GM12878 (cell line): ENCODE measurements at regions of chr15 and their contacts with region 1.

Region 1: GRCh38 chr15:89171136-89172072 is 50.0 kb downstream of the RLBP1 start:
- DNase-seq: no peak
- ATAC-seq: peak; percentile 22; the same call in 1 of the 3 replicates
- H3K4me3 ChIP-seq: no peak overlapping the region
- H3K27ac ChIP-seq: no peak overlapping the region
- H3K4me1 ChIP-seq: peaks cover 18% of the 10 kb centered on the region
- H3K27me3 ChIP-seq: no peaks in the 10 kb centered on the region
- CTCF ChIP-seq: peak; percentile 54 to 68 (median 64)
- EP300 ChIP-seq: no peak
- POLR2A ChIP-seq: no peak
- RAD21 ChIP-seq: peak; percentile 53

Region 2: GRCh38 chr15:89087830-89088604 is 83.4 kb before region 1 on chr15 and contains the start of gene ABHD2:
- CTCF ChIA-PET with region 1: interaction called, 42 read pairs
- POLR2A ChIA-PET with region 1: interaction called, 5 read pairs
- RAD21 ChIA-PET with region 1: interaction called, 10 read pairs
- SMC1A ChIA-PET with region 1: interaction called, 16 read pairs
- in situ Hi-C with region 1: no loop called
- intact Hi-C with region 1: no loop called
- DNase-seq: peak; percentile 99
- ATAC-seq: peak; percentile 96
- H3K4me3 ChIP-seq: peak within 1 kb of the TSS; percentile 88
- H3K27ac ChIP-seq: peak within 1 kb of the TSS; percentile 56
- H3K4me1 ChIP-seq: no peaks in the 10 kb centered on the region; the same call in 1 of the 2 replicates
- H3K27me3 ChIP-seq: no peaks in the 10 kb centered on the region
- CTCF ChIP-seq: no peak
- EP300 ChIP-seq: 0 out of 4 replicates have a peak, but pooled peaks of 1 of the 2 experiments have one; percentile 28
- POLR2A ChIP-seq: peak; percentile 84
- RAD21 ChIP-seq: no peak
- polyA plus RNA-seq, gene ABHD2: 1.2 to 4.7 TPM

Region 3: GRCh38 chr15:89112341-89112971 is 58.9 kb before region 1 on chr15:
- CTCF ChIA-PET with region 1: interaction called, 13 read pairs
- POLR2A ChIA-PET with region 1: no interaction called
- RAD21 ChIA-PET with region 1: no interaction called
- SMC1A ChIA-PET with region 1: interaction called, 8 read pairs
- in situ Hi-C with region 1: no loop called
- intact Hi-C with region 1: no loop called
- DNase-seq: peak; percentile 38
- ATAC-seq: peak; percentile 99
- H3K4me3 ChIP-seq: no peak overlapping the region
- H3K27ac ChIP-seq: peak overlapping the region; percentile 23
- H3K4me1 ChIP-seq: peaks cover 8% of the 10 kb centered on the region; the same call in 1 of the 2 replicates
- H3K27me3 ChIP-seq: no peaks in the 10 kb centered on the region
- CTCF ChIP-seq: no peak
- EP300 ChIP-seq: peak; percentile 66 to 74; a peak in 3 of 4 replicates
- POLR2A ChIP-seq: no peak
- RAD21 ChIP-seq: no peak

Region 4: DNA sequence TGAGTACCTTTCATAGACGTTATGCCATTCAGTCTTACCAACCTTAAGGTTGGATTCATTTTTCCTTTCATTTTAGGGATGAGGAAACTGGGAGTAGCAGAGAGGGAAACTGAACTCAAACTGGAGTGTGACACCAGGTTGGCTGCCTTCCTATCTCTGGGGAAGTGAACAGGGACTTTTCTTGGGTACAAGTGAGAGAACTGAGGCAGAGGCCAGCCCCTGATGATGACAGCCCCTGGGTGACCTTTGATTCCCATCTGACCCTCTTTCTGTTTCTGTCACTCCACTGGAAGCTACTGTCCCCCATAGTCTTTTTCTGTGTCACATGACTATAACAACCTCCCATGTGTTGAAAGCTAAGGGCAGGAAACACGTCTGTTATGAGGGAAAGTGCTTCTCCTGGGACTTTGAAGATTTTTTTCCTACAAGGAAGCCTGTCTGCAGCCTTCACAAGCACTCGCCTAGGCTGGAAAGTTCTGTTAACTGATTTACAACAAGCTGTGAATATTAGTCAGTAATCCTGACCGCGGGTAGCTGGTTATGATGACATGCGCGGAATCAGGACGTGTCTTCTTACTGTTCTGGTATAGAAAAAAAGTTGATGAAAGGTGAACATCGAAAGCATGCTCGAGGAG is 51.8 kb before region 1 on chr15:
- CTCF ChIA-PET with region 1: interaction called, 10 read pairs
- POLR2A ChIA-PET with region 1: interaction called, 3 read pairs
- RAD21 ChIA-PET with region 1: no interaction called
- SMC1A ChIA-PET with region 1: interaction called, 3 read pairs
- in situ Hi-C with region 1: no loop called
- intact Hi-C with region 1: no loop called
- DNase-seq: no peak
- ATAC-seq: no peak
- H3K4me3 ChIP-seq: no peak overlapping the region
- H3K27ac ChIP-seq: no peak overlapping the region
- H3K4me1 ChIP-seq: no peaks in the 10 kb centered on the region
- H3K27me3 ChIP-seq: no peaks in the 10 kb centered on the region
- CTCF ChIP-seq: no peak
- EP300 ChIP-seq: no peak
- POLR2A ChIP-seq: no peak
- RAD21 ChIP-seq: no peak

Region 5: DNA sequence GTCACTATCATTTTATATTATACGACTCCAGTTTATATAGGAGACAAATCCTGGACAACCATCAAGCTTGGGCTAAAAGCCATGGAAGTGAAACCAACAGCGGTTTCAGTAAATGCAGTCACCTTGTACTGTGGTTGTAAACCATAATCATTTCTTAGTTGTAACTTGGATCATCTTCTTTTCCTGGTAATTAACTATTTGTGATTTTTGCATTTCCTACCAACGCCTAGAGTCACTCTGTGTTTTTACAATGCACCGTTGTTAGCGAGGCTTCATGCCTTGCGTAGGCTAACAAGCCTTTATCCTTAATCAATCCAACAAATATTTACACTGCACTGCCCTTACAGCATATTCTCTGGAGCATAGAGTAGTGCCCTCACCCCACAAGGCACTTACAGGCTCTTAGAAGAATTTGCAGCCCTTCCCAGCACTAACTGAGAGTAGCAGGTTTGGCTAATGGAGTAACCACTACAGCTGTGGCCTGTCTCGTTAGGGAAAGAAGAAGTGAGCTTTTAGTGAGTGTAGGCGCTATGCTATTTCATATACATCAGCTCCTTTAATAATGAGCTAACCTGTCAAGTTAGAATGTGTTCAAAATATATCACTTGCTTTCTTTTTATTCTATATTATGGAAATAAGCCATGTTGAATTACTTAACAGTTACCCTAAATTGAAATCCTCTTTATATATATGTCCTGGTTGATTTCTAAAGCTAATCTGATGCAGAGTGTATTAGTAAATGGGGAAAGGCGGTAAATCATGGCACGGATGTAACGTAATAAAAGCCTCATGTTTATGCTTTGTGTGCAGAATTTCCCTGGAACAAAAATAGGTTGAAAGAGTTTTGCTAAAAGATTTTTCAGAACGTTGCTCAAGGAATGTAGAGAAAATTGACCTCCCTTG is 20.4 kb before region 1 on chr15:
- CTCF ChIA-PET with region 1: interaction called, 24 read pairs
- POLR2A ChIA-PET with region 1: interaction called, 3 read pairs
- RAD21 ChIA-PET with region 1: interaction called, 3 read pairs
- SMC1A ChIA-PET with region 1: interaction called, 11 read pairs
- in situ Hi-C with region 1: no loop called
- intact Hi-C with region 1: no loop called
- DNase-seq: no peak
- ATAC-seq: no peak
- H3K4me3 ChIP-seq: no peak overlapping the region
- H3K27ac ChIP-seq: no peak overlapping the region
- H3K4me1 ChIP-seq: no peaks in the 10 kb centered on the region
- H3K27me3 ChIP-seq: no peaks in the 10 kb centered on the region
- CTCF ChIP-seq: no peak
- EP300 ChIP-seq: no peak
- POLR2A ChIP-seq: no peak
- RAD21 ChIP-seq: no peak

Region 6: DNA sequence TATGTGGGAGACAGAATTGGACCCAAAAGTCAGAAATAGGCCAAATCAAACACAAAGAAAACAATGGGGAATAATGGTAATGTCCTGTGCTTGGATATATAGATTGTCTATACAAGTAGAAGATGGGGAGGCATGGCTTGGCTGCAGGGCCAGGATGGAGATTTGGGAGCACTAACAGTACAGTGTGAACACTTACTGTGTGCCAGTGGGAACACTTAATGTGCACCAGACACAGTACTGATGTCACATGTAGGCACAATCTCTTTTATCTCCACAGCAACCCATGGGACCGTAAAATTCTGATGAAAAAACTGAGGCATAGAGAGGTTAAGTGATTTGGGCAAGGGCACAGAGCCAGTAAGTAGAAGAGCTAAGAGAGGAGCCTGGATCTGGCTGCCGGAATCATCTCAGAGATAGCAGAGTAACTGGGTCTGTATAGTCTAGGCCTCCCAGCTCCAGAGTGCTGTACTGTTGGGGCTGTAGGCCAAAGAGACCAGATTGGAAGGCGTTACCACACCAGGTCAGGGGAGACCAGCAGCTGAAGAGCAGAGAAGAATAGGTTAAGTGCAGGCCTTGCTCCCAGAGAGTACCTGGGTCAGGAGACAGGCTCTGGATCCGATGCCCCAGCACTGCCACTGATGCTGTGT is 13.4 kb before region 1 on chr15:
- CTCF ChIA-PET with region 1: interaction called, 24 read pairs
- POLR2A ChIA-PET with region 1: no interaction called
- RAD21 ChIA-PET with region 1: no interaction called
- SMC1A ChIA-PET with region 1: interaction called, 3 read pairs
- in situ Hi-C with region 1: no loop called
- intact Hi-C with region 1: no loop called
- DNase-seq: no peak
- ATAC-seq: no peak
- H3K4me3 ChIP-seq: no peak overlapping the region
- H3K27ac ChIP-seq: no peak overlapping the region
- H3K4me1 ChIP-seq: no peaks in the 10 kb centered on the region
- H3K27me3 ChIP-seq: no peaks in the 10 kb centered on the region
- CTCF ChIP-seq: no peak
- EP300 ChIP-seq: no peak
- POLR2A ChIP-seq: no peak
- RAD21 ChIP-seq: no peak

Region 7: GRCh38 chr15:89378296-89379151 is 207.1 kb after region 1 on chr15:
- CTCF ChIA-PET with region 1: no interaction called
- POLR2A ChIA-PET with region 1: no interaction called
- RAD21 ChIA-PET with region 1: no interaction called
- SMC1A ChIA-PET with region 1: no interaction called
- in situ Hi-C with region 1: no loop called
- intact Hi-C with region 1: no loop called
- DNase-seq: no peak
- ATAC-seq: no peak
- H3K4me3 ChIP-seq: no peak overlapping the region
- H3K27ac ChIP-seq: no peak overlapping the region
- H3K4me1 ChIP-seq: no peaks in the 10 kb centered on the region
- H3K27me3 ChIP-seq: peaks cover 26 to 32% of the 10 kb centered on the region in 2 experiments
- CTCF ChIP-seq: no peak
- EP300 ChIP-seq: no peak
- POLR2A ChIP-seq: no peak
- RAD21 ChIP-seq: no peak

Region 8: DNA sequence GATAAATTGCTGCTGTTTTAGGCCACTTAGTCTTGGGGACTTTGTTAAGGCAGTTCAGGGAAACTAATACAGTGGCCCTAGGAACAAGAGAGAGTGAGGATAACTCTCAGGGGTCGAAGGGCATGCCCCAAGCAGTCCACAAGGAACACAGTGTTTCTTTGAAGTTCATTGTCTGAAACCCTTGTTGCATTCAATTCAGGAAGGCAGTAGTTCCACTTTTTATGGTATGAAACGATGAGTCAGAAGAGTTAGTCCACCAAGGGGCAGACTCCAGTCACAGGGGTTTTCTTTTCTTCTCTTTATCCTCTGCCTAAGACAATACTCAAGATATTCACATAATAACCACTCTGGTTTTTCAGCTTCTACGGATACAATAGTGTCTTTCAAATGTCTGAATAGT is 380.1 kb after region 1 on chr15:
- CTCF ChIA-PET with region 1: no interaction called
- POLR2A ChIA-PET with region 1: no interaction called
- RAD21 ChIA-PET with region 1: no interaction called
- SMC1A ChIA-PET with region 1: no interaction called
- in situ Hi-C with region 1: no loop called
- intact Hi-C with region 1: no loop called
- DNase-seq: peak; percentile 56
- ATAC-seq: peak; percentile 95
- H3K4me3 ChIP-seq: no peak overlapping the region
- H3K27ac ChIP-seq: peak overlapping the region; percentile 24; the same call in 1 of the 2 replicates
- H3K4me1 ChIP-seq: peaks cover 7% of the 10 kb centered on the region
- H3K27me3 ChIP-seq: no peaks in the 10 kb centered on the region
- CTCF ChIP-seq: no peak
- EP300 ChIP-seq: peak in 1 of 2 experiments; percentile 42; a peak in 1 of 4 replicates
- POLR2A ChIP-seq: no peak
- RAD21 ChIP-seq: no peak

Region 9: GRCh38 chr15:91150502-91151160 is 1979.2 kb after region 1 on chr15:
- CTCF ChIA-PET with region 1: no interaction called
- POLR2A ChIA-PET with region 1: no interaction called
- RAD21 ChIA-PET with region 1: no interaction called
- SMC1A ChIA-PET with region 1: no interaction called
- in situ Hi-C with region 1: no loop called
- intact Hi-C with region 1: no loop called
- DNase-seq: no peak
- ATAC-seq: no peak
- H3K4me3 ChIP-seq: no peak overlapping the region
- H3K27ac ChIP-seq: no peak overlapping the region
- H3K4me1 ChIP-seq: no peaks in the 10 kb centered on the region
- H3K27me3 ChIP-seq: no peaks in the 10 kb centered on the region
- CTCF ChIP-seq: no peak
- EP300 ChIP-seq: no peak
- POLR2A ChIP-seq: no peak
- RAD21 ChIP-seq: no peak